CD8-positive, alpha-beta T cell (primary cell): ENCODE measurements at regions of chr20 and their contacts with region 1.

Region 1: GRCh38 chr20:5788385-5788895 is 38.2 kb downstream of the SHLD1 start:
- DNase-seq: peak; percentile 48 to 91 (median 76)
- ATAC-seq: peak; percentile 99
- H3K4me3 ChIP-seq: no peak overlapping the region
- H3K4me3 Mint-ChIP-seq: no peak overlapping the region
- H3K27ac ChIP-seq: no peak overlapping the region
- H3K27ac Mint-ChIP-seq: no peak overlapping the region
- H3K4me1 ChIP-seq: no peaks in the 10 kb centered on the region
- H3K4me1 Mint-ChIP-seq: peaks cover 5% of the 10 kb centered on the region
- H3K27me3 ChIP-seq: no peaks in the 10 kb centered on the region
- H3K27me3 Mint-ChIP-seq: no peaks in the 10 kb centered on the region
- CTCF ChIP-seq: peak; percentile 95

Region 2: GRCh38 chr20:5550733-5551529 is 237.5 kb before region 1 on chr20:
- CTCF ChIA-PET with region 1: interaction called, 13 read pairs
- POLR2A ChIA-PET with region 1: no interaction called
- intact Hi-C with region 1: no loop called
- DNase-seq: no peak
- ATAC-seq: peak; percentile 50
- H3K4me3 ChIP-seq: no peak overlapping the region
- H3K4me3 Mint-ChIP-seq: no peak overlapping the region
- H3K27ac ChIP-seq: no peak overlapping the region
- H3K27ac Mint-ChIP-seq: peak overlapping the region; percentile 8
- H3K4me1 ChIP-seq: no peaks in the 10 kb centered on the region
- H3K4me1 Mint-ChIP-seq: peaks cover 10% of the 10 kb centered on the region
- H3K27me3 ChIP-seq: no peaks in the 10 kb centered on the region
- H3K27me3 Mint-ChIP-seq: no peaks in the 10 kb centered on the region
- CTCF ChIP-seq: no peak

Region 3: DNA sequence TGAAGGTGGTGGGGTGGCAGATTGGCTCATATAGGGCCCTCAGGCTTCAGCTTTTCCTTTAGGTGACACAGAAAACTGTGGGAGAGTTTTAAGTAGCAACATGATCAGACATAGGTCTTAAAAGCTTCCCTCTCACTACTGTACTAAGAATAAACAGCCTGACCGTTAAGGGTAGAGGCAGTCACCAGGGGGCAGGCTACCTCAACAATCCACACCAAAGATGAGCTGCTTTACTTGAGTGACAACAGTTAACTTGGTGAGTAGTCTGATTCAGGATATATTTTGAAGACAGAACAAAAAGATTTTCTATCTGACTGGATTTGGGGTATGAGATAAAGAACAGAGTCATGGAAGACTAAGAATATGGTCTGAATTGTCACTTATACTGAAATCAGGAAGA is 231.3 kb before region 1 on chr20:
- CTCF ChIA-PET with region 1: interaction called, 20 read pairs
- POLR2A ChIA-PET with region 1: no interaction called
- intact Hi-C with region 1: loop called (anchors 1 kb)
- DNase-seq: peak; percentile 17 to 66 (median 51)
- ATAC-seq: peak; percentile 74
- H3K4me3 ChIP-seq: no peak overlapping the region
- H3K4me3 Mint-ChIP-seq: no peak overlapping the region
- H3K27ac ChIP-seq: no peak overlapping the region
- H3K27ac Mint-ChIP-seq: peak overlapping the region; percentile 18
- H3K4me1 ChIP-seq: no peaks in the 10 kb centered on the region
- H3K4me1 Mint-ChIP-seq: no peaks in the 10 kb centered on the region
- H3K27me3 ChIP-seq: no peaks in the 10 kb centered on the region
- H3K27me3 Mint-ChIP-seq: no peaks in the 10 kb centered on the region
- CTCF ChIP-seq: no peak

Region 4: DNA sequence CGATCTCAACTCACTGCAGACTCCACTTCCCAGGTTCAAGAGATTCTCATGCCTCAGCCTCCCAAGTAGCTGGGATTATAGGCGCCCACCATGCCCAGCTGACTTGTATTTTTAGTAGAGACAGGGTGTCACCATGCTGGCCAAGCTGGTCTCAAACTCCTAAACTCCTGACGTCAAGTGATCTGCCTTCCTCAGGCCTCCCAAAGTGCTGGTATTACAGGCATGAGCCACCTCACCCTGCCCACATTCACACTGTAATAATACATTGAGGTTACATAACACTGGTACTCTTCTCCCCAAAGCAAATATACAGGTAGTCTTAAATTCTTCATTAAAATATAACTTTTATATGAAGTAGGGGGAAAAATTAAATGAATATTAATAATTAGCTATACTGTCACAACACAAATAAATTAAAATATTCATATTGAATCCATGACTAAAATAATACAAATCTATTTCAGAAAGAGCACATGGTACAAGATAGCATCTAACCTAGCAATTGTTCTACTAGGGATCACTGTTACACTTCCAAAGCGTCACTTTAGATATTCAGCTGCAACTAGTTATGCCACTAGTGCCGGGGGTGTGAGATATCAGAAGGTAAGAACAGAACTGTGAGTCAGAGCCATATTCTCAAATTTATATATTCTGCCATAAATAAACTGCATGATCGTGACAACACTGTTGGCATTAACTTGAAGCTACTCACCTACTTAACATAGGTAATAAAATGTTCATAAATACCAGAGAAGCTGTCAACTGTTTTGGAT is 207.3 kb before region 1 on chr20:
- CTCF ChIA-PET with region 1: interaction called, 14 read pairs
- POLR2A ChIA-PET with region 1: no interaction called
- intact Hi-C with region 1: no loop called
- DNase-seq: no peak
- ATAC-seq: no peak
- H3K4me3 ChIP-seq: no peak overlapping the region
- H3K4me3 Mint-ChIP-seq: no peak overlapping the region
- H3K27ac ChIP-seq: no peak overlapping the region
- H3K27ac Mint-ChIP-seq: no peak overlapping the region
- H3K4me1 ChIP-seq: no peaks in the 10 kb centered on the region
- H3K4me1 Mint-ChIP-seq: peaks cover 19% of the 10 kb centered on the region
- H3K27me3 ChIP-seq: no peaks in the 10 kb centered on the region
- H3K27me3 Mint-ChIP-seq: no peaks in the 10 kb centered on the region
- CTCF ChIP-seq: no peak

Region 5: GRCh38 chr20:5592823-5593739 is 195.4 kb before region 1 on chr20:
- CTCF ChIA-PET with region 1: interaction called, 13 read pairs
- POLR2A ChIA-PET with region 1: no interaction called
- intact Hi-C with region 1: no loop called
- DNase-seq: peak in 1 of 9 experiments; percentile 29
- ATAC-seq: peak; percentile 66
- H3K4me3 ChIP-seq: peak overlapping the region; percentile 21 to 26
- H3K4me3 Mint-ChIP-seq: peak overlapping the region; percentile 82
- H3K27ac ChIP-seq: peak overlapping the region; percentile 40 to 60
- H3K27ac Mint-ChIP-seq: peak overlapping the region; percentile 94
- H3K4me1 ChIP-seq: peaks cover 27% of the 10 kb centered on the region
- H3K4me1 Mint-ChIP-seq: peaks cover 68% of the 10 kb centered on the region
- H3K27me3 ChIP-seq: no peaks in the 10 kb centered on the region
- H3K27me3 Mint-ChIP-seq: no peaks in the 10 kb centered on the region
- CTCF ChIP-seq: no peak

Region 6: DNA sequence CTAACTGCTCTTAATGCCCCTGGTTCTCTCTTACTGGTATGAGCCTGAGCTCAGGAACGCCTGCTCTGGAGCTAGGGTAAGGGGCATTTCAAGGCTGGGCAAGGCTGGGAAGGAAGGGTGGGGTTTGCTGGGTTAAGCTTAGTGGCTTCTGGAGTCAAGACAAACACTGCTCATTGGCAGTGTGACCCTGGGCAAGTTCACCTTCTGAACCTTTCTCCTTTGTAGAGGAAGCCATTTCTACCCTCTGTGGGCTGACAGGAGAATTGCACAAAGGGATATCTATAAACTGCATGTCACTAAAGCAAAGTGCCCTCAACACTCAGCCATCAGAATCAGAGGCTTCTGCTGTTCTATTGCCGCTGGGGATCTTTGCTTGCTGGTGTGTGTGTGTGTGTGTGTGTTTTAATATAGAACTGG is 285.7 kb after region 1 on chr20:
- CTCF ChIA-PET with region 1: interaction called, 4 read pairs
- POLR2A ChIA-PET with region 1: no interaction called
- intact Hi-C with region 1: loop called (anchors 1 to 2 kb)
- DNase-seq: peak in 2 of 9 experiments; percentile 17 to 31
- ATAC-seq: no peak
- H3K4me3 ChIP-seq: no peak overlapping the region
- H3K4me3 Mint-ChIP-seq: no peak overlapping the region
- H3K27ac ChIP-seq: no peak overlapping the region
- H3K27ac Mint-ChIP-seq: no peak overlapping the region
- H3K4me1 ChIP-seq: no peaks in the 10 kb centered on the region
- H3K4me1 Mint-ChIP-seq: no peaks in the 10 kb centered on the region
- H3K27me3 ChIP-seq: no peaks in the 10 kb centered on the region
- H3K27me3 Mint-ChIP-seq: peaks cover 8% of the 10 kb centered on the region
- CTCF ChIP-seq: no peak